Kidney (tissue), 22 donors: ENCODE measurements at regions of chr16 and their contacts with region 1.

Region 1: GRCh38 chr16:11396241-11397048 is 51.2 kb downstream of the RMI2 start:
- DNase-seq: peak; percentile 70 to 87 (median 82)
- H3K4me3 ChIP-seq: no peak overlapping the region
- H3K27ac ChIP-seq: no peak overlapping the region
- H3K4me1 ChIP-seq: peaks cover 0 to 7% (median 0%) of the 10 kb centered on the region in 3 donors
- H3K27me3 ChIP-seq: no peaks in the 10 kb centered on the region
- CTCF ChIP-seq: peak; percentile 99

Region 2: DNA sequence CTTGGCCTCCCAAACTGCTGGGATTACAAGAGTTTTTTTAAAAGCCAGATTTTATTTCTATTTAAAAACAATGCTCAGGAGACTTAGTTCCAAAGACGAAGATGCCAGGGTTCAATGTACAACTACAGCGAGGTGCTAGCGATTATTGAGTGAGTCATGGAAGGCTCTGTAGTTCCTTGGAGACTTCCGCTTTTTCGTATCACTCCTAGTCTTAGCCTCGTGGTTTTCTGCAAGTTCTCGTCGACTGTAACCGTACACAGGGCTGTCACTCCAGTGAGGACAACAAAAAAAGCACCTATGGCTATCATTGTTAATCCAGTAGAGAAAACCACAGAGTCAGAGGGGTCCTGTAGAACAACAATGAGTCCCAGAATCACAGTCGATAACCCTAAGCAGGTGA is 423.4 kb after region 1 on chr16:
- intact Hi-C with region 1: loop called (anchors 10 kb)
- DNase-seq: no peak
- H3K4me3 ChIP-seq: no peak overlapping the region
- H3K27ac ChIP-seq: no peak overlapping the region
- H3K4me1 ChIP-seq: no peaks in the 10 kb centered on the region
- H3K27me3 ChIP-seq: no peaks in the 10 kb centered on the region
- CTCF ChIP-seq: no peak